ENCODE measurements at regions of chr1 and their contacts with region 1.

Region 1: DNA sequence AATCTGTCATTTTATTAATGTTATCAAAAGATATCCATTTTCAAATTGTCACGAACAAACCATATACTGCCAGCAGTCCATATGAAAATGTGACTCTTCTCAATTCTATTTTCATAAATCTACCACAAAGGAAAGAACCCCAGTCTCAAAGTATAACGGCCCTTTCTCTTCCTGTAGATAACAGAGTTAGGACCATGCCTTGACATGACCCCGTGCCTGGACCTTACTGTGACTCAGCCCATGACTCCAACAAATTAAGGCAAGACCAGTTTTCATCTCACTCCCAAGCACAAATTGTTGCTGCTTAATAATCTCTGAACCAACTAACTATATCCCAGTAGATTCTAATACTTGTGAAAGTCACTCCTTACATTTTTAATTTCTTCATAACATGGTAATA is 124.4 kb upstream of the NFIA start:
- DNase-seq: no peak
- H3K4me3 ChIP-seq: no peak overlapping the region
- CTCF ChIP-seq: no peak

Region 2: DNA sequence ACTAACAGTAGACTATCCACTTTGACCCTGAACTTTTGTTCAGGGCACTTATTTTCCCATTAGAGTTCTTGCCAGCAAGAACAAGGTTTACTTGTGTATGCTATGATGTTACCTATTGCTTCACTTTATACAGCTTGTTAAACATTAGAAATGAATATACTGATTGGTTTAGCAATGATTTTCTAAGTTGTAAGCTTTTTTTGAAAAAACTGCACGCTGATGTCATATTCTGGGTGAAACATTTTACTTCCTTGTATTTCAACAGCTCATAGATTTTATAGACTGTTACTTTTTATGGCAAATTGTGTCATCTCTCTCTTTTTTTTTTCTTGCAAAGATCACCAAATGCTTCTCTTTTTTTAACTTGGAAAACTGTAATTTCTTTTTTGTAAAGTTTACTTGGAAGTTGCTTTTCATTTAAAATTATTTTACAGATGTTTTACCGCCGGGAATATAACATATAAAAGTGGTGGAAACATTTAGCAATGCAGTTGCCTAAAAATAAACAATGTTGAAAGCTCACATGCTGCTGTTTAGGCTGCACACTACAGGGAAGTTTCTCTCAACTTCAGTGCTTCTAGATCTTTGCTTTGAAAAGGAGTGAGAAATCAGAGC is 91.0 kb before region 1 on chr1:
- in situ Hi-C with region 1: loop called (anchors 5 kb)
- DNase-seq: no peak
- H3K4me3 ChIP-seq: no peak overlapping the region
- CTCF ChIP-seq: no peak

Region 3: DNA sequence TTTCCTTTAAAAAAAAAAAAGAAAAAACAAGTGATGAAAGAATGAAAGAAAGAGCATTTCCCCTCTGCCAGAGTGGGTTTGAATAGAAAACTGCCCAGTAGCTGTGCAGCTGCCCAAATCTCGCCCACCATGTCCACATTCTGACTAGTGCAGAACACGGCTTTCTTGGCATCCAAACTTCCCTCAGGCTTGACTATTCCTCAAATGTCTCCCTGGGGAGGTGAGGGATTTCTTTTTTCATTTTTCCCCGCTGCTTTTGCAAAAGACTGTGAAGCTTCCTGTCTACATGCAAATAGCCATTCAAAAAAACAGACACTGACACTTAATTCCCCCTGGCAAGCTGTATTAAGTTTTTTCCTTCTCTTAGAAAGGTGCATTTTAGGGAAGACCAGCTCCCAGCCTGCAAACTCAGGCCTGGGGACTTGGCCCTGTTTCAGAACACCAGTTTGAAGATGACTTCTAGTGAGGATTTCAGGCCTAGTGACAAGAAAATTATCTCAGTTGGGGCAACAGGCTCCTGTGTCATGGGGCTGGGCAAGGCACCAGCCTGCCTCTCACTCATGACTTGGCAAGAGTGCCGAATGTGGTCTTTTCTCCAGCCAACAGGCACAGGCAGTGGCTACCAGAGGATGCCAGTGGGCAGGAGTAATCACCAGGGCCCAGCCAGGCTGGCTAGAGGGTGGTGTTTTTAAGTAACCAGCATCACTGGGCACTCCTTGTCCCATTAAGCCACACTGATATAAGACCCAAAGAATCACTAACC is 53.7 kb before region 1 on chr1:
- in situ Hi-C with region 1: no loop called
- DNase-seq: no peak
- H3K4me3 ChIP-seq: no peak overlapping the region
- CTCF ChIP-seq: no peak

Measured in astrocyte of the cerebellum (primary cell).